ENCODE measurements at regions of chr20 and their contacts with region 1.

Region 1: DNA sequence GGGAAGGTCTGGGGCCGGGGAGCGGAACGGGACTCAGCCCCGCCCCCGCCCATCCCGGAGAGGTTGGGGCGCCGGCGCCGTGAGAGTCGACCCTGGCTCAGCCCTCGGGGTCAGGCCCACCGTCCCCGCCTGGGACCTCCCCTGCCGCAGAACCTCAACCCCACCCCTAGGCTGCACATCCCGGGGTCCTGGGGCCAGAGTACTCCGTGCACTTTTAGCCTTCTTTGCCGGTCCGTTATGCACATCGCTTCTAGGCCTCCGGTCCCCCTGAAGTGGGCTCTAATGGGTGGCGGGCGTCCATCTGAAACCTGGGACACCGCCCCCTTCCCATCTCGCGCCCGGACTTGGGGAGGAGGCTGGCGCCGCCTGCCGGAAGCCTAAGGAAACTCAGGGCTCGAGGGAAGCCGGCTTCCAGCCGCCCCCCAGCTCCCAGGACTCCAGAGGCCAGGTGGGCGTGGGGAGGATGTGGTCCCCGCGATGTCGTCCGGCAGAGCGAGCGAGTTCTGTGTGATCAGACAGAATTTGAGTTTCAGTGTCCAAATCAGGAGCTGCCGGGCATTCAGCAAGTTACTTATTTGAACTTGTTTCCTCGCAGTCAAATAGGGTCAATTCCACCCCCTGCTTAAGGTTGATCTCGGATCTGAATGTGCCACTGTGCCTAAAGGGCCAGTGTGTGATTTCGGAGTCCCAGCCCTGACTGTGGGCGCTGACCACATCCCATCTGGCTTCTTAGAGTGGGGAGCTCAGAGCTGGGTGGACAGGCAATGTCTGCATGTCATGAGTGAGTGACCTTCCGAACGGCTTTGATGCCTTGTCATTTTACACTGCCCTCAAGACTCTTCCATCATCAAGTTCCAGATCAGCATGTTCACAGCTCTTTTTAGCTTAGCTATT is 47.6 kb downstream of the CPXM1 start:
- DNase-seq: peak in 2 of 4 donors; percentile 19 to 83
- ATAC-seq: peak; percentile 13
- H3K4me3 ChIP-seq: peak overlapping the region; percentile 33 to 41
- H3K27ac ChIP-seq: no peak overlapping the region
- H3K4me1 ChIP-seq: peaks cover 19 to 30% of the 10 kb centered on the region in 2 donors
- H3K27me3 ChIP-seq: peaks cover 12 to 88% of the 10 kb centered on the region in 2 donors
- CTCF ChIP-seq: peak; percentile 37 to 61

Region 2: DNA sequence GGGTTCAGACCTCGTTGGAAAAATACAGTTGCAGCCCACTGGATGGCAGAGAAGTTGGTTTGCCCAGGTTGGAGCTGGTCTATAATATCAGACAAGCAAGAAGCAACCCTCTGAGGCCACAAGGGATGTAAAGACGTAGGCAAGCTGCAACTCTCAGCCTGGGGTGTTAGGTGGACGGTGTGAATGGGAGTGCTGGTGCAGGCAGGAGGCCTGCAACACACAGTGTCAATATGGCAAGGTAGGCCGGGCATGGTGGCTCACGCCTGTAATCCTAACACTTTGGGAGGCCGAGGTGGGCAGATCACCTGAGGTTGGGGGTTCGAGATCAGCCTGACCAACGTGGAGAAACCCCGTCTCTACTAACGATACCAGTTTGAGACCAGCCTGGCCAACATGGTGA is 98.3 kb after region 1 on chr20:
- intact Hi-C with region 1: loop called in 1 of 2 experiments (anchors 5 kb)
- DNase-seq: no peak
- ATAC-seq: no peak
- H3K4me3 ChIP-seq: no peak overlapping the region
- H3K27ac ChIP-seq: no peak overlapping the region
- H3K4me1 ChIP-seq: peaks cover 0 to 9% of the 10 kb centered on the region in 2 donors
- H3K27me3 ChIP-seq: no peaks in the 10 kb centered on the region
- CTCF ChIP-seq: no peak